ENCODE measurements at regions of chr10 and their contacts with region 1.

Region 1: DNA sequence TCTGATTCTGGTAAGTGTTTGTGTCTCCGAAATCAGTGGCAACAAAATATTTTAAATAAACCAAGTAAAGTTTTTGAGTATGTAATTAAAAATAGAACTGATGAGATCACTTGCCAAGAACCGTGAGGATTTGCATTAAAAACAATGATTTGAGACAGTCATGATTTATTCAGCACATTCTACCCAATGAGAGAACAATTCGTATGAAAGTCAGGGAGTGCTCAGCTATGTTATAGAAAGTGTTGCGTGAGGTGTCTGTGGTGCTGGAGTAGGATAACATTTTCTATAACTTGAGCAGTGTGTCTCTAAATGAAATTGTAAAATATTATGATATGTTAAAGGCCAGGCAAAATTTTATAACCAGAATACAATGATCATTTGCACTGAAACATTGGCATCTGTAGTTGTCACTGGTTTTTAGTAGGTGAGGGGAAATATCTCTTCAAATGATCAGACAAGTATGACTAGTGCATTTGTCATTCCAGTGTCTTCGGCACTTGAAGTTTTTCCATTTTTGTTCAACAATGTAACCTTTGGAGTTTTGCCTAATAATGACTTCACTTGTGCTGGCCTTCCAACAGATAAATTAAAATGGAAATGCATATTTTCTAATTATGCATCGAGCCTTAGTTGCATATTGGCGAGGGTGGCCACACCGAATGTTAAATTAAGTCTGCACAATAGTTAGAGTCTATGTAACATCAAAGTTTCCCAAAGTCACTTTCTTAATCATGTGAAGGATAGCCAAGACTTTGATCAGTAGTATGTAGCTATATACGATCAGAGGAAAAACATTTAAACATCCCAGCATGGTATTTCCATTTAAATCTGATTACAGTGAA is 335.9 kb downstream of the GFRA1 start:
- DNase-seq: peak; percentile 21
- H3K4me3 ChIP-seq: no peak overlapping the region
- H3K27ac ChIP-seq: no peak overlapping the region
- H3K4me1 ChIP-seq: peaks cover 43% of the 10 kb centered on the region
- H3K27me3 ChIP-seq: no peaks in the 10 kb centered on the region
- CTCF ChIP-seq: no peak
- POLR2A ChIP-seq: no peak

Region 2: DNA sequence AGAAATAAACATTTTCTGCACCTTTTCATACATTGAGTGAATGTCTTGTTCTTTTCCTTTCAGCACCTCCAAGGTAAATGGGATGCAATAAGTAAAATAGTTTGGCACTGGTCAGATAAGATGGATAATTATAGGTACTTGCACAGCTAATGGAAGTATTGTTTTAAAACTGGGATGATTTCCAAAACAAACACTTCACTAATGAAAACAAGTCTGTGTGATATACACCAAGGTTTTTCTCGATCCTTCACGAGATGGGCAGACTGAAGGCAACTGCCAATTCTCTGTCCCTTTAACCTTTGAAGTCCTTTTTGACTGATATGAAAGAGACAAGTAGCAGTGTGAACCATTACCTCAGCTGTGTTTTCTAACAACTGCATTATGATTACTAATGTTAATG is 88.0 kb before region 1 on chr10:
- CTCF ChIA-PET with region 1: interaction called, 3 read pairs
- POLR2A ChIA-PET with region 1: no interaction called
- dilution Hi-C with region 1: no loop called
- intact Hi-C with region 1: loop called (anchors 5 kb)
- DNase-seq: peak; percentile 43
- H3K4me3 ChIP-seq: no peak overlapping the region
- H3K27ac ChIP-seq: no peak overlapping the region
- H3K4me1 ChIP-seq: no peaks in the 10 kb centered on the region
- H3K27me3 ChIP-seq: no peaks in the 10 kb centered on the region
- CTCF ChIP-seq: no peak
- POLR2A ChIP-seq: no peak

Region 3: DNA sequence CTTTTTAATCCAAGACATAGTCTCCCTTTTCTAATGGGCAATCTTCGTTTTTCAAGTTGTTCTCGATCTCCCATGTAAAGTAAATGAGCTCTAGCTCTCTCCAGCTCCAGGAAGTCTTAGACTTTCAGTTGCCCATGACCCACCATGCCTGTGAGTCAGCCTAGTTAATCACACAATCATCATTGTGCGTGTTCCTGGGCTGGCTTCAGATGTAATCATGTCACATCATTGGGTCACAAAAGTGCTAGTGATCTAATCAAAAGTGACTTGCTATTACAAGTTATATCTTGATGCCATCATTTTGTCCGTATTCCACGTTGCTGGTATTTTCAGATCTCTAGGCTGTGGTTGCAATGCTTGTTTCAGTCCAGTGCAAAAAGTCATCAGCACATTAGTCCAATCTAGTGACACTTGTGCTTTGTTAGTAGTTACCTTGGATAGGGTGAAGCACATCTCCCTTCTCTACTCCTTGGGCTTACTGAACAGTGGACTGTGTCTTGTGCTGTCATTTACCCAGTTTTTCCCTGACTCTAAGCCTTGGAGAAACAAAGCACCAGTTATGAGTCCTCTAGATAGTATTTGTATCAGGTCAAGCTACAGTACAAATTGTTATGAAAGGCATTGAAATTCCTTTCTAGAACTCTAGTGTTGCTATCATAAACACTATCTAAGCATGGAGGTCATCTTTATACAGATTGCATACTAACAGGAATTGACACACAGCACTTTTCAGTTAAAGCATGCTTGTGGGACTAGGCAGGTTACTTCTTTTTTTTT is 19.3 kb after region 1 on chr10:
- CTCF ChIA-PET with region 1: interaction called, 5 read pairs
- POLR2A ChIA-PET with region 1: no interaction called
- dilution Hi-C with region 1: no loop called
- intact Hi-C with region 1: loop called (anchors 2 kb)
- DNase-seq: no peak
- H3K4me3 ChIP-seq: no peak overlapping the region
- H3K27ac ChIP-seq: no peak overlapping the region
- H3K4me1 ChIP-seq: peaks cover 12% of the 10 kb centered on the region
- H3K27me3 ChIP-seq: no peaks in the 10 kb centered on the region
- CTCF ChIP-seq: no peak
- POLR2A ChIP-seq: no peak

Region 4: GRCh38 chr10:116272440-116273283 is 335.5 kb after region 1 on chr10 and contains the start of gene GFRA1:
- CTCF ChIA-PET with region 1: no interaction called
- POLR2A ChIA-PET with region 1: no interaction called
- dilution Hi-C with region 1: no loop called
- intact Hi-C with region 1: loop called (anchors 5 kb)
- DNase-seq: no peak
- H3K4me3 ChIP-seq: peak within 1 kb of the TSS in 1 of 3 experiments; percentile 4
- H3K27ac ChIP-seq: no peak within 1 kb of the TSS
- H3K4me1 ChIP-seq: peaks cover 11% of the 10 kb centered on the region
- H3K27me3 ChIP-seq: peaks cover 47 to 64% of the 10 kb centered on the region in 2 experiments
- CTCF ChIP-seq: no peak
- POLR2A ChIP-seq: no peak
- total RNA-seq, gene GFRA1: 0.88 and 0.95 TPM in 2 replicates